ENCODE measurements at regions of chrX and their contacts with region 1.

Region 1: DNA sequence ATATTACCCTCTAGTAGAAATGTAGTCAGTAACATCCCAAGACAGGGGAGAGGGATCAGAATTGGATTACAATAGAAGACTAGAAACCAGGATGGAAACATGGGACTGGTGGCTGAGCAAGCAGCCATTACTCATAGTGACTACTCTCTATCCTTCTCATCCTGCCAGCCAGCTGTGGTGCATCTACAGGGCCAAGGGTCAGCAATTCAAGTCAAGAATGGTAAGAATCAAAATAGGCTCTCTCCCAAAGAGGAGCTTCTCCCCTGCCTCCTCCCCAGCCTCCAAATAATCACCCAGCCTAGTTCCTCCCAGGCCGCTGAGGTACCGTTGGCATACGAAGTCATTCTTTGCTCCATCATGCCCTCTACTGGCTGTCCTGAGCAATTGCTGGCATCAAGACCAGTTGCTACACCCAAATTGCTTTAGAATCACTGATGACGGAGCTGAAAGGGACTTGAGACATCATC is 19.4 kb downstream of the AWAT2 start:
- DNase-seq: peak; percentile 7
- ATAC-seq: peak; percentile 71
- H3K4me3 ChIP-seq: no peak overlapping the region
- H3K27ac ChIP-seq: no peak overlapping the region
- H3K4me1 ChIP-seq: no peaks in the 10 kb centered on the region
- H3K27me3 ChIP-seq: no peaks in the 10 kb centered on the region
- CTCF ChIP-seq: peak; percentile 82
- EP300 ChIP-seq: no peak
- POLR2A ChIP-seq: no peak
- RAD21 ChIP-seq: peak; percentile 31; the same call in 1 of the 2 replicates

Region 2: GRCh38 chrX:69493193-69493592 is 537.1 kb before region 1 on chrX:
- CTCF ChIA-PET with region 1: interaction called, 8 read pairs
- POLR2A ChIA-PET with region 1: no interaction called
- in situ Hi-C with region 1: loop called (anchors 5 kb)
- intact Hi-C with region 1: loop called (anchors 5 kb)
- DNase-seq: peak; percentile 44
- ATAC-seq: peak; percentile 93
- H3K4me3 ChIP-seq: peak overlapping the region in 1 of 3 experiments; percentile 50; a peak in 2 of 6 replicates
- H3K27ac ChIP-seq: no peak overlapping the region
- H3K4me1 ChIP-seq: peaks cover 7% of the 10 kb centered on the region; the same call in 1 of the 2 replicates
- H3K27me3 ChIP-seq: peaks cover 0 to 4% of the 10 kb centered on the region in 2 experiments; a peak in 1 of 5 replicates
- CTCF ChIP-seq: peak; percentile 78
- EP300 ChIP-seq: no peak
- POLR2A ChIP-seq: no peak
- RAD21 ChIP-seq: peak; percentile 71

Region 3: DNA sequence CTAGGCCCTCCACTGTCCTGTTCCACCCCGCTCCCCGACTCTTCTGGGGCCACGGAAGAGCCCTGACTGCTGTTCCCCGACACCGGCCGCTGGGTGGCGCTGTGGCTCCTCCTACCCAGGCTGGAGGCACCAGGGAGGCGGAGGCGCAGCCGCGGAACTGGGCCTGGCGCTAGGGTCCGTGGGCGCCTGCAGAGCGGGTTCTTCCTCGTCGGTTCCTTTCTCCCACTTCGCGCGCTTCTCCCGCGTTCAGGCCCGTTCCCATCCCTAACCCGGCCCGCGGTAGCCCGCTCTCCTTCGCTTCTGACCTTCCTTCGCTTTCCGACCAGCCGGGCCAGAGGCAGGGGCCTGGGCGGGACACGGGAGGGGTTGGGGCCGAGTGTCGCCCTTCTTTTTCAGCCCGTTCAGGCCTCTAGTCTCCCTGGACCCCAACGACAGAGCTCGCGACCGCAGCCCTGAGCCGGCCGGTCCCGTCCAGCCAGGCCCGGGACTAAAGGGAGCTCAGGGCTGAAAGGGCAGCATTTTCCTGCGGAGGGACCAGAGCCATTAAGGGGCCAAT is 491.9 kb before region 1 on chrX:
- CTCF ChIA-PET with region 1: no interaction called
- POLR2A ChIA-PET with region 1: interaction called, 3 read pairs
- in situ Hi-C with region 1: no loop called
- intact Hi-C with region 1: loop called (anchors 1 kb)
- DNase-seq: peak; percentile 52
- ATAC-seq: peak; percentile 98
- H3K4me3 ChIP-seq: peak overlapping the region; percentile 63 to 73 (median 73)
- H3K27ac ChIP-seq: no peak overlapping the region
- H3K4me1 ChIP-seq: peaks cover 42% of the 10 kb centered on the region
- H3K27me3 ChIP-seq: no peaks in the 10 kb centered on the region
- CTCF ChIP-seq: peak; percentile 97
- EP300 ChIP-seq: no peak
- POLR2A ChIP-seq: no peak
- RAD21 ChIP-seq: peak; percentile 95

Region 4: DNA sequence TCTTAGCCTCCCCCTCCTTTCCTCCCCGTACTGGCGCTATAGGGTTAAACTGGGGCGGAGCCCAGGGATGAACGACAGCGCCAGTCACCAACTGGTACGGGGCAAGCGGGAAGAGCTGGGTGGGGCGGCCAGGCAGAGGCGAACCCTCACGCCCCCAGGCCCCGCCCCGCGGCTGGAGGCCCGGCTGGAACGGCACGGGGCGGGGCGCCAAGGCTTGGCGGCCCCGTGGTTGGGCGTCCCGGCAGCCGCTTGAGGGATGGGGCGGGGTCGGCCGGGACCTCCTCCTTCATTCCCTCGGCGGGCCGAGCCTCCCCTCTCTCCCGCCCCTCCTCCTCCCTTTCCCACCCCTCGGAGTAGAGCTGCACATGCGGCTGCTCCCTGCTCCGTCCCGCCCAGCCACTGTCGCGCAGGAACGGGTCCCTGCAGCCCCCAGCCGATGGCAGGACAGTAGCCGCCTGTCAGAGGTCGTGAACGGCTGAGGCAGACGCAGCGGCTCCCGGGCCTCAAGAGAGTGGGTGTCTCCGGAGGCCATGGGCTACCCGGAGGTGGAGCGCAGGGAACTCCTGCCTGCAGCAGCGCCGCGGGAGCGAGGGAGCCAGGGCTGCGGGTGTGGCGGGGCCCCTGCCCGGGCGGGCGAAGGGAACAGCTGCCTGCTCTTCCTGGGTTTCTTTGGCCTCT is 414.4 kb before region 1 on chrX and contains the start of gene EDA:
- CTCF ChIA-PET with region 1: no interaction called
- POLR2A ChIA-PET with region 1: no interaction called
- in situ Hi-C with region 1: no loop called
- intact Hi-C with region 1: loop called (anchors 1 kb)
- DNase-seq: peak; percentile 73
- ATAC-seq: peak; percentile 92
- H3K4me3 ChIP-seq: peak within 1 kb of the TSS; percentile 68 to 74 (median 73)
- H3K27ac ChIP-seq: peak within 1 kb of the TSS; percentile 57
- H3K4me1 ChIP-seq: peaks cover 70% of the 10 kb centered on the region
- H3K27me3 ChIP-seq: no peaks in the 10 kb centered on the region
- CTCF ChIP-seq: 0 out of 2 replicates have a peak, but pooled peaks have one; percentile 6
- EP300 ChIP-seq: no peak
- POLR2A ChIP-seq: peak in 1 of 2 experiments; percentile 39; a peak in 1 of 4 replicates
- RAD21 ChIP-seq: no peak
- total RNA-seq, gene EDA: 6.4 and 8.8 TPM in 2 replicates

Region 5: GRCh38 chrX:70096052-70096451 is 65.7 kb after region 1 on chrX:
- CTCF ChIA-PET with region 1: interaction called, 6 read pairs
- POLR2A ChIA-PET with region 1: no interaction called
- in situ Hi-C with region 1: loop called (anchors 10 kb)
- intact Hi-C with region 1: loop called (anchors 5 kb)
- DNase-seq: peak; percentile 8
- ATAC-seq: peak; percentile 68
- H3K4me3 ChIP-seq: no peak overlapping the region
- H3K27ac ChIP-seq: no peak overlapping the region
- H3K4me1 ChIP-seq: no peaks in the 10 kb centered on the region
- H3K27me3 ChIP-seq: no peaks in the 10 kb centered on the region
- CTCF ChIP-seq: peak; percentile 53
- EP300 ChIP-seq: no peak
- POLR2A ChIP-seq: no peak
- RAD21 ChIP-seq: no peak